ENCODE measurements at regions of chr17 and their contacts with region 1.

Region 1: GRCh38 chr17:7572588-7573323 is 6.7 kb upstream of the CD68 start:
- DNase-seq: peak; percentile 100
- H3K4me3 Mint-ChIP-seq: peak overlapping the region; percentile 85
- H3K27ac Mint-ChIP-seq: peak overlapping the region; percentile 99
- H3K4me1 Mint-ChIP-seq: peaks cover 55% of the 10 kb centered on the region
- H3K27me3 Mint-ChIP-seq: no peaks in the 10 kb centered on the region

Region 2: GRCh38 chr17:7239091-7240027 is 333.4 kb before region 1 on chr17 and contains the start of gene PHF23:
- CTCF ChIA-PET with region 1: no interaction called
- intact Hi-C with region 1: loop called (anchors 1 kb)
- DNase-seq: peak; percentile 99
- H3K4me3 Mint-ChIP-seq: peak within 1 kb of the TSS; percentile 94
- H3K27ac Mint-ChIP-seq: peak within 1 kb of the TSS; percentile 98
- H3K4me1 Mint-ChIP-seq: peaks cover 64% of the 10 kb centered on the region
- H3K27me3 Mint-ChIP-seq: no peaks in the 10 kb centered on the region
- total RNA-seq, gene PHF23: 8.4 to 10.0 TPM

Region 3: DNA sequence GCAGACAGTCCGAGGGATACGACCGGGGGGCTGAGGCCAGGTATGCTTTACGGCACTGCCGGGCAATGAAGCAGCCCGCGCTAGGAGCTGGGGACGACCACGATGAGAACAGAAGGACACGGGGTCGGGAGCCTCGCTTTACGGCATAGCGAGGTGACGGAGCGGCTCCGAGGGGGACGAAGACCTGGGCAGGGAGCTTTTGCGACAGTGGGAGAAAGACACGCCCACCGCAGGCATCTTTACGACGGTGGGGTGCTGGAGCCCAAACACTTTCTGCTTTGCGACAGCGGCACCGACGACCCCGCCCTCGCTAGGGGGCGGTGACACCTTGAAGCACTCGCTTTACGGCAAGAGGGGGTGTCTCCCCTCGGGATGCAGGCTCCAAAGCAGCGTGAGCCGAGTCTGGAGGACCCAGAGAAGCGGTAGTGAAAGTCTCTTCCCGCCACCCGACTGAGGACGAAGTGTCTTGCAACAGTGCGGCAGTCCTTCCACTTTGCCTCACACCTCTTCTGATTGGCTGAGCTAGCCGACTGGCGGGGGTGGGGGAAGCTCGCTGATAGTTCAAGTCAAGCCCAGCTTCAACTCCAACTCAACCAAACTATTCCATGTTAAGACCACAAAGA is 243.3 kb before region 1 on chr17:
- CTCF ChIA-PET with region 1: no interaction called
- intact Hi-C with region 1: loop called (anchors 1 kb)
- DNase-seq: peak; percentile 98
- H3K4me3 Mint-ChIP-seq: peak overlapping the region; percentile 97
- H3K27ac Mint-ChIP-seq: peak overlapping the region; percentile 91
- H3K4me1 Mint-ChIP-seq: peaks cover 54% of the 10 kb centered on the region
- H3K27me3 Mint-ChIP-seq: no peaks in the 10 kb centered on the region

Region 4: GRCh38 chr17:7435221-7435675 is 137.5 kb before region 1 on chr17 and contains the start of gene TMEM102:
- CTCF ChIA-PET with region 1: interaction called, 3 read pairs
- intact Hi-C with region 1: loop called (anchors 1 kb)
- DNase-seq: peak; percentile 99
- H3K4me3 Mint-ChIP-seq: peak within 1 kb of the TSS; percentile 92
- H3K27ac Mint-ChIP-seq: peak within 1 kb of the TSS; percentile 91
- H3K4me1 Mint-ChIP-seq: peaks cover 36% of the 10 kb centered on the region
- H3K27me3 Mint-ChIP-seq: peaks cover 12% of the 10 kb centered on the region
- total RNA-seq, gene TMEM102: 3.3 to 3.5 TPM

Region 5: GRCh38 chr17:7548585-7549400 is 24.0 kb before region 1 on chr17 and contains the start of gene TNFSF12:
- CTCF ChIA-PET with region 1: no interaction called
- intact Hi-C with region 1: loop called (anchors 1 kb)
- DNase-seq: peak; percentile 69
- H3K4me3 Mint-ChIP-seq: peak within 1 kb of the TSS; percentile 77
- H3K27ac Mint-ChIP-seq: peak within 1 kb of the TSS; percentile 33
- H3K4me1 Mint-ChIP-seq: peaks cover 47% of the 10 kb centered on the region
- H3K27me3 Mint-ChIP-seq: no peaks in the 10 kb centered on the region
- total RNA-seq, gene TNFSF12: 5.8 to 7.4 TPM

Region 6: DNA sequence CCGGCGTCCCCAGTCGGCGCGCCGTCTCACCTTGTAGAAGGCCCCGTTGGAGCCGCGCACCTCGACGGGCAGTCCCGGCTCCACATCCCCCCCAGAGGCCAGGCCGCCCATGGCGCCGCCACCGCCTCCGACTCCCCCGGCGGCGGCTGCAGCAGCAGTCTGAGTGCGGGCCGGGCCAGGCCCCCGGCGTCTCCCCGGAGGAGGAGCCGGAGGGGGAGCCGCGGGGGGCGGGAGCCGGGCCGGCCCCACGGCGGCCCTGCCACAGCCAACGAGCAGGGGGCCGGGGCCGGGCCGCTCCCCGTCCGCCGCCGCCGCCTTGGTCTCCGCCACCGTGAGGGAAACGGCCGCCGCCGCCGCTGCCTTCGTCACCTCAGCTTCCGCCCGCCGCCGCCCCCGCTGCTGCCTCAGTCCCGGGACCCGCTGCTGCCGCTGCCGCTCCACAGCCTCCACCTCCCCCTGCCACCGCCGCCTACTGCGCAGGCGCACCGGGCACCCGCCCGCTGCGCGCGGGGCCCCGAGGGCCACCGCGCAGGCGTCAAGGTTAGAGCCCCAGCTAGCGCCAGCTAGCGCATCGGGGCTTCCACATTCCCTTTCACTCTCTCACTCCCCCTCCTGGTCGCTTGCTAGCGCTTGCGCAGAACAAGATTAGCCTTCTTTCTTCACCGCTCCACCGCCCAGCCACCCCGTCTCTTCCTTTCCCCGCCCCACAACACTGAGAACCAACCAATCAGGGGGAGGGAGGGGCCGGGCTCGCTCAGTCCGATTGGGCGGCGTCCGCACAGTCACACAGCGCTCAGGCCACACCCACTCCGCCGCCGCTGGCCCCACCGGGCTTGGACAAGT is 41.9 kb after region 1 on chr17 and contains the start of gene FXR2:
- CTCF ChIA-PET with region 1: no interaction called
- intact Hi-C with region 1: loop called (anchors 1 kb)
- DNase-seq: peak; percentile 100
- H3K4me3 Mint-ChIP-seq: peak within 1 kb of the TSS; percentile 83
- H3K27ac Mint-ChIP-seq: peak within 1 kb of the TSS; percentile 84
- H3K4me1 Mint-ChIP-seq: peaks cover 32% of the 10 kb centered on the region
- H3K27me3 Mint-ChIP-seq: no peaks in the 10 kb centered on the region
- total RNA-seq, gene FXR2: 29.7 to 36.8 TPM

Measured in activated naive CD4-positive, alpha-beta T cell treated with anti-CD3 and anti-CD28 coated beads for 36 hours (primary cell).